PC-3 (cell line): ENCODE measurements at regions of chr14 and their contacts with region 1.

Region 1: DNA sequence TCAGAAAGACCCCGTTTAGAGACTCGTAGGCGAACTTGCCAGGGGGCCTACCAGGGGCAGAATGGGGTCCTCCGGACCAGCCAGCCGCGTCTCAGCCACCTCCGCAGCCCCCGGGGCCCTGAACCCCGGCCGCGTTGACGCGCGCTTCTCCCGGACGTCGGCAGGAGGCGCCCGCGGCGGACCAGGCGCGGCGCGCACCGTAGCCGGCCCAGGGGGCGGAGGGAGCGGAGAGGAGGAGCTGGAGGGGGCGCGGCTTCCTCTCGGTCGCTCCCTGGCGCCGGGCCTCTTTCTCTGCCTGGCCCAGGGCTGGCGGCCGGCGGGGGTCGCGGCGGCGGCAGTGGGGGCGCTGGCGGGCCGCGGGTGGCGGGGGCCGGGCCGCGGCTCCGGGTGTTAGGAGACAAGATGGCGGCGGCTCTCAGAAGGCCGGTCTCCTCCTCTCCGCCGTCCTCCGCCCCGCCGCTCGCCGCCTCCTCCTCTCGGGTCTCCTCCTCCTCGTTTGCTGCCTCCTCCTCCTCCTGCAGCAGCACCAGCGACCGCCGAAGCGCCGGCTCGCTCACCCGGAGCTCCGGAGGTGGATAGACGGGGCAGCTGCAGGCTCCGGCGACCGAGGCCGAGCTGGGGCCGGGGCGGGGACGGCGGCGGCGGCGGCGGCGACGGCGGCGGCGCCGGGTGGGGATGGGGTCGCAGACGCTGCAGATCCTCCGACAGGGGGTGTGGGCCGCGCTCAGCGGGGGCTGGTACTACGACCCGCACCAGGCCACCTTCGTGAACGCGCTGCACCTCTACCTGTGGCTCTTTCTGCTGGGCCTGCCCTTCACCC is at the start of gene PCNX1:
- DNase-seq: peak; percentile 86
- ATAC-seq: peak; percentile 69
- H3K4me3 ChIP-seq: peak within 1 kb of the TSS; percentile 76
- H3K27ac ChIP-seq: peak within 1 kb of the TSS; percentile 21; the same call in 1 of the 2 replicates
- H3K4me1 ChIP-seq: peaks cover 19% of the 10 kb centered on the region
- H3K27me3 ChIP-seq: no peaks in the 10 kb centered on the region
- CTCF ChIP-seq: peak; percentile 82
- total RNA-seq, gene PCNX1: 21.5 and 23.3 TPM in 2 replicates

Region 2: DNA sequence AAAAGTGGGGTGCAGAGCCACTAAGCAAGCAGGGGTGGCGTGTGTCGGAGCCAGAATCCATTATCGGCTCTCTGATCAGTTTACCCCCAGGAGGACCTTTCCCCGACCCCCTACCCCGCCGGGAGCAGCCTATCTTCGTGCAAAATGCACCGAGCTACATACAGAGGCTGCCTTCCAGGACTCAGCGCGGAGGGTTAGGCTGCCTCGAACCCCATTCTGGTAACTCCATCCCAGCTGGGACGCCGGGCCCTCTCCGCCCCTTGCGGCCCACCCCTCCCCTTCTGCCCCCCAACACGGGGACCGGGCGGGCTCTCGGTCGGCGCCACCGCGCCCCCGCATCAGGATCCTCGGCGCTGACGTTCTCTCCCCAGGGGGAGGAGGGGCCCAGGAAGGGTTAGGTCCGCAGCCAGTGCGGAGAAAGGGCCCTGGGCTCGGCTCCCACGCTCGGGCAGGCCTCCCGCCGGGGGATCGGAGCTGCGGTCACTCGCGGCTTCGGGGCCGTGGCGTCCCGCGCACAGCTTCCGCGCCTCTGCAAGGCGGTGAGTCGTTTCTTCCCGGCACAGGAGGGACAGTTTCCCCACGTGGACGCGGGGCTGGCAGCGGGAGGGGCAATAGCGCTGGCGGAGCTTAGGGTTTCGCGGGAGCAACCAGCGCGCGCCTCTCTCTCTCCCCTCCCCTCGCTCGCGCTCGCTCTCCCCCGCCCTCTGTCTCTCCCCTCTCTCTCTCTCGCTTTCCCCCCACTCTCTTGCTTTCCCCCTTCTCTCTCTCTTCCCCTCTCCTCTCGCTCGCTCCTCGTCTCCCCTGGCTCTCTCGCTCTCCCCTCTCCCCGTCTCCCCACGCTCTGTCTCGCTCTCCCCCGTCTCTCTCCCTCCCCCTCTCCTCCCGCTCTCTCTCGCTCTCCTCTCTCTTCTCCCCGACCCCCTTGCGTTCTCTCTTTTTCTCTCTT is 85.5 kb before region 1 on chr14:
- CTCF ChIA-PET with region 1: interaction called, 13 read pairs
- POLR2A ChIA-PET with region 1: no interaction called
- intact Hi-C with region 1: loop called (anchors 1 kb)
- DNase-seq: peak; percentile 41
- ATAC-seq: peak; percentile 44
- H3K4me3 ChIP-seq: peak overlapping the region; percentile 76
- H3K27ac ChIP-seq: no peak overlapping the region
- H3K4me1 ChIP-seq: peaks cover 23% of the 10 kb centered on the region
- H3K27me3 ChIP-seq: no peaks in the 10 kb centered on the region
- CTCF ChIP-seq: no peak

Region 3: DNA sequence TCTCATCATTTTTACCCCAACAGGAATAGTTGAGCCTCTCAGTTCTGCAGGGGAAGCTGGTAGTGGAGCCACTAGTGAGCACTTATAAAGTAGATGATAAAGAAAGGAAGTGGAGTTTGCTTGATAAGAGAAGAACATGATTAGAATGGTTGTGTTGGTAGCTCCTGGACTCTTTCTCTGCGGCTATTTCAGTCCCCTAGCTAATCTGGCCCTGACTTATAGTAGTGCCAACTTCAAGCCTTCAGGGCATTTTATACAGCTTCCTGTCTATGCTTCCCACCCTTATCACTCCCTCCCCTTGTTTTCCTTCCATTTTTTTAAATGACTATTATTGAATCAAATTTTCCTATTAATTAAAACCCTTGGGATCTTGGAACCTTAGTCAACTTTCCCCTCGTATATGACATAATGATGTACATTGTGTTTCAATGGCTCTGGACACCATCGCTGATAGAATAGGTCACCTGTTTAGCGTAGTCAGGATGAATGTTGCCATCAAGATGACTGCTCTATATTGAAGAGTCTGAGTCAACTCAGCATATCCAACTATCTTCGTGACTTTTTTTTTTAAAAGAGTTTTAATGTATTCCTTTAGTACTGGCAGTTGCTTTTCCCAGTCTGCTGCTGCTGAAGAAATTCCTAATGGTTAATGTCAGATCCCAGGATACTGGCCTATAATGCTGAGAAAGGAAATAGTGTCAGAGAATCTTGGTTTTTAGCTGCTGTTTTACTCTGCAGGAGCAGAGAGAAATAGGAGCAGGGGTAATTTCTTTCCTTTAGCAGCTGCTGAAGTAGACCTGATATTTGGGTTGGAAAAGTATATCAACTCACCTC is 16.3 kb before region 1 on chr14:
- CTCF ChIA-PET with region 1: no interaction called
- POLR2A ChIA-PET with region 1: no interaction called
- intact Hi-C with region 1: no loop called
- DNase-seq: no peak
- ATAC-seq: no peak
- H3K4me3 ChIP-seq: no peak overlapping the region
- H3K27ac ChIP-seq: no peak overlapping the region
- H3K4me1 ChIP-seq: no peaks in the 10 kb centered on the region
- H3K27me3 ChIP-seq: peaks cover 22% of the 10 kb centered on the region
- CTCF ChIP-seq: no peak

Region 4: GRCh38 chr14:70919774-70920173 is 12.4 kb after region 1 on chr14:
- CTCF ChIA-PET with region 1: interaction called, 7 read pairs
- POLR2A ChIA-PET with region 1: no interaction called
- intact Hi-C with region 1: loop called (anchors 1 kb)
- DNase-seq: peak; percentile 19
- ATAC-seq: peak; percentile 16
- H3K4me3 ChIP-seq: no peak overlapping the region
- H3K27ac ChIP-seq: no peak overlapping the region
- H3K4me1 ChIP-seq: peaks cover 34% of the 10 kb centered on the region
- H3K27me3 ChIP-seq: no peaks in the 10 kb centered on the region
- CTCF ChIP-seq: no peak

Region 5: DNA sequence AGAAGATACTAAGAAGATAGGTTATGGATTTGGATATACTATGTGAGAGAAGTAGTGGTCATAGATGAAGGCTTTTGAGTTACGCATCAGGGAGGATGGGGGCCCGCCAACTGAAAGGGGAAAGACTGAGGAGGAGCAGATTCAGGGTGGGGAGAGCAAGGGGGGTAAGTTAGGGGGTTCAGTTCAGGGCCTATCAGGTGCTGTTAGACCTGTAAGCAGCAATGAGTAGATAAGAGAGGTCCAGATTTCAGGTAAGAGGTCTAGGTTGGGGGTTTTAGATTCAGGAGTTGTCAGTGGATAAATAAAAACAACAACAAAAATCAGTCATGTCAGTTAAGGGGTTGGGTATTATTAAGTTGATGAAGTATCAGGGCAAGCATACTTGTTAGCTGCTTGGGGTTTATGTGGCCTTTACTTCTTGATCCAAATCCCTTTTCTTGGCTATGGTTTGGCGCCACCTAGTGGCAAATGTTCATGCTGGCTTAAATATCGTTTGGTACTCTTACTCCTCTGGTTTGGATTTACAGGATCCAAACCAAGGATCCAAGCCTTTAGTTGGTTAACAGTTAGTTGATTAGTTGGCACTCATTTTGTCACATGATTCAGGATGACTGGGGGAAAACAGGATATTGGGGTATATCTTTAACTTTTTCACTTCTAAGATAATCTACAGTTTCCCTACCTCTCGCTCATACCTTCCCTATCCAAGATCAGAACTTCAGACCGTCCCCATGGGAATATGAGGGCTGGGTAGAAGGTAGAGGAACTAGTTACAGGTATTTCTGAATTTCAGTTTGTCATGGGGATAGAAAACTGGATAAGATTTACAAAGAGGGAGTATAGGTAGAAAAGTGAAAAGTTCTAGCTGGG is 65.0 kb after region 1 on chr14:
- CTCF ChIA-PET with region 1: interaction called, 11 read pairs
- POLR2A ChIA-PET with region 1: interaction called, 8 read pairs
- intact Hi-C with region 1: loop called (anchors 1 kb)
- DNase-seq: peak; percentile 93
- ATAC-seq: peak; percentile 96
- H3K4me3 ChIP-seq: no peak overlapping the region
- H3K27ac ChIP-seq: no peak overlapping the region
- H3K4me1 ChIP-seq: no peaks in the 10 kb centered on the region
- H3K27me3 ChIP-seq: no peaks in the 10 kb centered on the region
- CTCF ChIP-seq: peak; percentile 97

Region 6: DNA sequence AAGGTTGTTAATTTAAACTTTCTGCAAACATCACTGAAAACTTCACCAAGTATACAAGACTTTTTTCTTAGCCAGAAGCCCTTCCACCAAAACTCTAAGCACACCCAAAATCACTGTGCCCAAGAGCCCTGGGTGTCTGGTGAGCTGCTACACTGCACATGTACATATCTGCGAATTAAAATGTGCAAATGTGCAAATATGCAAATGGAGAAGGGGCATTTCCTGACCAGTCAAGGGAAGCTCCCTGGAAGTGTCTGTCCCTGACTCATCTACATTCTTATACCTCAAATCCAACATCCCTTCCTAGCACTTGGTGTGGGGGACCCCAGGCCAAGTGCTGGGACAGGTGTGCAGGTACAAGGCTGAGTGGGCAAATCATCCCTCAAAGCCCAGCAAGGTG is 123.6 kb after region 1 on chr14:
- CTCF ChIA-PET with region 1: no interaction called
- POLR2A ChIA-PET with region 1: no interaction called
- intact Hi-C with region 1: no loop called
- DNase-seq: no peak
- ATAC-seq: no peak
- H3K4me3 ChIP-seq: no peak overlapping the region
- H3K27ac ChIP-seq: no peak overlapping the region
- H3K4me1 ChIP-seq: no peaks in the 10 kb centered on the region
- H3K27me3 ChIP-seq: no peaks in the 10 kb centered on the region
- CTCF ChIP-seq: no peak

Region 7: GRCh38 chr14:71050204-71050823 is 142.9 kb after region 1 on chr14:
- CTCF ChIA-PET with region 1: no interaction called
- POLR2A ChIA-PET with region 1: no interaction called
- intact Hi-C with region 1: no loop called
- DNase-seq: peak; percentile 49
- ATAC-seq: peak; percentile 82
- H3K4me3 ChIP-seq: no peak overlapping the region
- H3K27ac ChIP-seq: no peak overlapping the region
- H3K4me1 ChIP-seq: no peaks in the 10 kb centered on the region
- H3K27me3 ChIP-seq: no peaks in the 10 kb centered on the region
- CTCF ChIP-seq: peak; percentile 64